Panc1 (cell line): ENCODE measurements at regions of chr20 and their contacts with region 1.

Region 1: GRCh38 chr20:63309261-63310071 is 16.5 kb downstream of the COL20A1 start:
- DNase-seq: no peak
- ATAC-seq: peak; percentile 77
- H3K4me3 ChIP-seq: no peak overlapping the region
- H3K27ac ChIP-seq: no peak overlapping the region
- H3K4me1 ChIP-seq: peaks cover 3% of the 10 kb centered on the region; the same call in 1 of the 2 replicates
- H3K27me3 ChIP-seq: no peaks in the 10 kb centered on the region
- CTCF ChIP-seq: peak; percentile 97

Region 2: DNA sequence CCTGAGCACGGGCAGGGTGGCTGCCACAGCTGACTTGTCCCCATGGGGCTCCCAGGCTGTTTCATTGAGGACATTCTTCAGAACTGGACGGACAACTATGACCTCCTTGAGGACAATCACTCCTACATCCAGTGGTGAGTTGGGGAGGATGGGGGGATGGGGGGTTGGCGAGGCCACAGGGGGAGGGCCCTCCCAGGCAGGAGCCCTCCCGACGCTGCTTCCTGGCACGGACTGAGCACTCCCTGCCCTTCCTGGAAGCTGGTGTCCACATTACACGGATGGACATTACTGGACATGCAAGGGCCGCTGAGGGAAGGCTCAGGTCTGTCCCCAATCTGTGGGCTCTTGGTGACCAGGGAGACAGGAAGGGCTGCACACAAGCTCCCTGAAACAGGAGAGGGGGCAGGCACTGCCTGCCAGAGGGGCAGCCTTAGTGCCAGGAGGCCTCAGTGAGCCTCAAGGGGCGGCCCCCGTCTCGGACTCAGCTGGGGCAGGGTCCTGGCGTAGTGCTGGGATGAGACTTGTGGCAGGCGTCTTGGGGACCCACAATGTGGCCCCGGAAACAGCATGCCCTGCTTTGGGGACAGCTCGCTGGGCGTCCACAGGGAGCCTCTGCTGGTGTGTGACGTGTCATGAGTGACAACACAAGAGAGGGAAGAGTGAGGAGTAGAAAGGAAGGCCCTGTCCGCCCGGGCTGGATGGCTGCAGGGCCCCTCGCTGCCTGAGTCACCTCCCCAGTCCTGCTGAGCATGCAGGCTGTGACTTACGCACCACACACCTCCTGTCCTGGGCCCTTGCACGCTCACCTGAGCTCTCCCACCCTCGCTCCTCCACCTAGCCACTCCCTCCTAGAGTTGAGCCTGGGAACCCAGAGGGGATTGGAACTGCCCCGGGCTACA is 499.7 kb before region 1 on chr20:
- CTCF ChIA-PET with region 1: no interaction called
- POLR2A ChIA-PET with region 1: interaction called, 10 read pairs
- in situ Hi-C with region 1: no loop called
- intact Hi-C with region 1: no loop called
- DNase-seq: no peak
- ATAC-seq: no peak
- H3K4me3 ChIP-seq: no peak overlapping the region
- H3K27ac ChIP-seq: no peak overlapping the region
- H3K4me1 ChIP-seq: peaks cover 39% of the 10 kb centered on the region
- H3K27me3 ChIP-seq: no peaks in the 10 kb centered on the region
- CTCF ChIP-seq: no peak

Region 3: DNA sequence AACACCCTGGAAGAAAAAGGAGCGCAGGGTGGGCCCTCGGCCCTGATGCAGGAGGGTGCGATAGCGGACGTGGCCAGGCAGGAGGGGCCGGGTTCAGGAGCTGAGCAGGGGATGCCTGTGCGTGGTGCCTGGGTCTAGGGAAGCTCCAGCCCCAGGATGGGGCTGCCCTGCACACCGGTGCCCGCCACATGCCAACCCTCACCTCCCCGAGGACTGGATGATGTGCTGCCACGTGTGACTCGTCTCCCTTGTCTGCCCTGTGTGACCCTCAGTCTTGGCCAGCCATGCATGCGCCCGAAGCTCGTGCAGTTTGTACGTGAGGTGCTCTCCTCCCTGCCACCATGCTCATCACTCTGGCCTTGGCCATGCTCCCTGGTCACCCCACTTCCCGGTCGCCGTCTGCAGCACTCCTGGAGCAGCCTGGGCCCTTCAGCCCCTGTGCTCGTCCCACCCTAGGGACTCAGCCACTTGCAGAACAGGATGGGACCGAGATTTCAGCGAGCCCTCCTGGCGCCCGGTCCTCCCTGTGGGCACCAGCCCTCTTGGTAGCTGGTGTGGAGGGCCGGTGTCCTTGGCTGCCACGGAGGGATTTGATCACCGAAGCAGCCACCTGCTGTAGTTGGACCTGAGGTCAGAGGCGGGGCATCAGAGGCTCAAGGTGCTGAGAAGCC is 20.8 kb before region 1 on chr20:
- CTCF ChIA-PET with region 1: no interaction called
- POLR2A ChIA-PET with region 1: no interaction called
- in situ Hi-C with region 1: no loop called
- intact Hi-C with region 1: no loop called
- DNase-seq: no peak
- ATAC-seq: no peak
- H3K4me3 ChIP-seq: no peak overlapping the region
- H3K27ac ChIP-seq: no peak overlapping the region
- H3K4me1 ChIP-seq: peaks cover 13% of the 10 kb centered on the region
- H3K27me3 ChIP-seq: no peaks in the 10 kb centered on the region
- CTCF ChIP-seq: no peak

Region 4: DNA sequence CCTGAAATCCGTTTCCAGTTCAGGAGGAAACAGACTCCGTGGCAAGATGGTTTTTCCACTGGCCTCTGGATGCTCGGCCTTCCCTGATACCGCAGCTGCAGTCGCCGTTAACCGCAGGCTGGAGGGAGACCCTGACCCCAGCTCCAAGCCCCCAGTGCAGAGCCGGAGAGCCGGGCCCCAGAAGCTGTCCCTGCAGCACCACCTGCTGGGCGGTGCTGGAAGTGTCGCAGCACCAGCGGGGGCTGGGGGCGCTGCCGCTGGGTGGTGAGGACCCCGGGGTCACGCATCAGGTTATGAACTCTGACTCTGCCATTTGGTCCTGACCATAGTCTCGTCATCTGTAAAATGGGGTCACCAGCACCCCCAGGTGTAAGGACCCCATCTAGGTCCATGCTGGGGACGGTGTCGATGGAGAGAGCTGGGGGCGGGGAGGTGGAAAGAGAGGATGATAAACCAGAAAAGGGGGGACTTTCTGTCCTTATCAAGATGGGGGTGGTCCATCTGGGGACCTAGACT is 72.4 kb after region 1 on chr20:
- CTCF ChIA-PET with region 1: interaction called, 14 read pairs
- POLR2A ChIA-PET with region 1: no interaction called
- in situ Hi-C with region 1: no loop called
- intact Hi-C with region 1: loop called (anchors 1 kb)
- DNase-seq: peak; percentile 5
- ATAC-seq: peak; percentile 64
- H3K4me3 ChIP-seq: no peak overlapping the region
- H3K27ac ChIP-seq: no peak overlapping the region
- H3K4me1 ChIP-seq: no peaks in the 10 kb centered on the region; the same call in 1 of the 2 replicates
- H3K27me3 ChIP-seq: no peaks in the 10 kb centered on the region
- CTCF ChIP-seq: peak; percentile 99